Mammary epithelial cell (primary cell): ENCODE measurements at regions of chr3 and their contacts with region 1.

Region 1: GRCh38 chr3:69276884-69277283 is 109.0 kb downstream of the FRMD4B start:
- DNase-seq: peak; percentile 51
- H3K4me3 ChIP-seq: no peak overlapping the region
- H3K27ac ChIP-seq: peak overlapping the region; percentile 27
- H3K4me1 ChIP-seq: peaks cover 15% of the 10 kb centered on the region
- H3K27me3 ChIP-seq: no peaks in the 10 kb centered on the region
- CTCF ChIP-seq: no peak

Region 2: GRCh38 chr3:69294014-69294775 is 17.3 kb after region 1 on chr3:
- CTCF ChIA-PET with region 1: no interaction called
- dilution Hi-C with region 1: no loop called
- in situ Hi-C with region 1: no loop called
- intact Hi-C with region 1: loop called (anchors 2 kb)
- DNase-seq: peak; percentile 98
- H3K4me3 ChIP-seq: no peak overlapping the region
- H3K27ac ChIP-seq: peak overlapping the region; percentile 94
- H3K4me1 ChIP-seq: peaks cover 42% of the 10 kb centered on the region
- H3K27me3 ChIP-seq: no peaks in the 10 kb centered on the region
- CTCF ChIP-seq: peak in 1 of 2 donors; percentile 16

Region 3: GRCh38 chr3:69474186-69474585 is 197.3 kb after region 1 on chr3:
- CTCF ChIA-PET with region 1: no interaction called
- dilution Hi-C with region 1: no loop called
- in situ Hi-C with region 1: no loop called
- intact Hi-C with region 1: no loop called
- DNase-seq: no peak
- H3K4me3 ChIP-seq: no peak overlapping the region
- H3K27ac ChIP-seq: no peak overlapping the region
- H3K4me1 ChIP-seq: no peaks in the 10 kb centered on the region
- H3K27me3 ChIP-seq: no peaks in the 10 kb centered on the region
- CTCF ChIP-seq: no peak